ENCODE measurements at regions of chr14 and their contacts with region 1.

Region 1: DNA sequence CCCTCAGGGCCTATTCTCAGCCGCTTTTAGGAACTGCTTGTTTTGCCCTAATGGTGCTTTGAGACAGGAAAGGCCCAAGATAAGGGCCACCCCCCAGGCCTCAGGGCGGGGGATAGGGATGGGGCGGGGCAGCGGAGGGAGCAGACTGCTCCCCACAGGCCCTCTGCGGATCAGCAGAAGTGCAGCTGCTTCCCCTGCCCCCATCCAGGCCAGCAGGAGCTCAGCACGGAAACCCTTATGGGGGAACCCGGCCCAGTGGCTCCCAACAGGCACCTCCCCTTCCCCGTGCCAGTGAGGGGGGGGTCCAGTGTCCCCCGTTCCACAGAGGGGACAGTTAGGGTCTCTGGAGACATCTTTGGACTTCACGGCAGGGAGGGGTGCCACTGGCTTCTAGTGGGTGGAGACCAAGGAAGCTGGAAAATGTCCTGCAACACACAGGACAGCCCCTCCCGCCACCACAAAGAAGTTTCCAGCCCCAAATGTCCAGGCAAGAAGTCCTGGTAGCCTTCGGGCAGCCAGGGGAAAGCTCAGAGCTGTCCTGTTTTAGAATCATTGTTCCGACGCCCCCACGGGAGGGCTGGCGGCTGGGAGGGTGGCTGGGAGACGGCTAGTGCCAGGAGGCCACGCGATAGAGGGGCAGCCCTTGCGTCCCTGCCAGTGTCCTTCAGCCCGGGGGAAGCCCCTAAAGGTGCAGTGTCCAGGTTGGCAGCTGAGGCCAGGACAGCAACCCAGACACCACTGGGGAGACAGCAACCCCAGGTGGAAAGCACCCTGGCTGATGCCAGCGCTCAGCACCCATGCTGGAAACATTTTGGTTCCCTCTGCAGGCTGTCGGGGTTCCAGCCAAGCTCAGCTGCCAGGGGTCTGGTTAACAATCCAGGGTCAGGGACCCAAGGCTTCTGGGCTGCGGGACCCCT is 10.4 kb upstream of the GPR132 start:
- DNase-seq: no peak
- ATAC-seq: peak; percentile 29; the same call in 1 of the 2 replicates
- H3K4me3 ChIP-seq: no peak overlapping the region
- H3K27ac ChIP-seq: no peak overlapping the region
- H3K4me1 ChIP-seq: no peaks in the 10 kb centered on the region; the same call in 1 of the 2 replicates
- H3K27me3 ChIP-seq: no peaks in the 10 kb centered on the region
- CTCF ChIP-seq: no peak

Region 2: GRCh38 chr14:104973300-104974145 is 102.1 kb before region 1 on chr14:
- CTCF ChIA-PET with region 1: no interaction called
- POLR2A ChIA-PET with region 1: interaction called, 10 read pairs
- in situ Hi-C with region 1: no loop called
- intact Hi-C with region 1: no loop called
- DNase-seq: peak; percentile 89
- ATAC-seq: peak; percentile 54
- H3K4me3 ChIP-seq: peak overlapping the region in 1 of 2 experiments; percentile 35; a peak in 2 of 4 replicates
- H3K27ac ChIP-seq: peak overlapping the region; percentile 93
- H3K4me1 ChIP-seq: peaks cover 54% of the 10 kb centered on the region
- H3K27me3 ChIP-seq: no peaks in the 10 kb centered on the region
- CTCF ChIP-seq: no peak

Region 3: GRCh38 chr14:105041841-105042765 is 33.5 kb before region 1 on chr14:
- CTCF ChIA-PET with region 1: no interaction called
- POLR2A ChIA-PET with region 1: no interaction called
- in situ Hi-C with region 1: no loop called
- intact Hi-C with region 1: no loop called
- DNase-seq: no peak
- ATAC-seq: no peak
- H3K4me3 ChIP-seq: no peak overlapping the region
- H3K27ac ChIP-seq: no peak overlapping the region
- H3K4me1 ChIP-seq: peaks cover 5% of the 10 kb centered on the region; the same call in 1 of the 2 replicates
- H3K27me3 ChIP-seq: no peaks in the 10 kb centered on the region
- CTCF ChIP-seq: no peak